ENCODE measurements at regions of chrX and their contacts with region 1.

Region 1: DNA sequence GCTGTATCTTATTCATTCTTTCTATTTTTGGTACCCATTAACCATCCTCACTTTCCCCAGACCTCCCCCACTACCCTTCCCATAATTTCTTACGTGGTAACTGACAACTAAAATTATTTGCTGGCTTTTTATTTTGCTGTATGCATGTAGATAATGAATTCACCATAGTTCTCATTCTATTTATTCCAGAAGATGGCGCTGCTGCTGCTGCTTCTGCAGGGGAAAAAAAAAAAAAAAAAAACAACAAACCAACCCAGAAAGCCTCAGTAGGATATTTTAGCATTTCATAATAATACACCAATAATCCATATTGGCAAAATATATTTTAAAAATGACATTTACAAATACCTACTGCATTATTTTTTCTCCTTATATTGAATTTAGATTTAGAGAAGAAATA is 416.6 kb upstream of the MAGEB18 start:
- DNase-seq: no peak
- ATAC-seq: no peak
- H3K4me3 ChIP-seq: no peak overlapping the region
- H3K27ac ChIP-seq: no peak overlapping the region
- H3K4me1 ChIP-seq: no peaks in the 10 kb centered on the region
- H3K27me3 ChIP-seq: no peaks in the 10 kb centered on the region
- CTCF ChIP-seq: peak in 2 of 3 experiments; percentile 16 to 37; a peak in 1 of 6 replicates
- POLR2A ChIP-seq: no peak
- RAD21 ChIP-seq: 0 out of 2 replicates have a peak, but pooled peaks have one; percentile 11

Region 2: GRCh38 chrX:25968920-25969319 is 247.4 kb after region 1 on chrX:
- CTCF ChIA-PET with region 1: no interaction called
- POLR2A ChIA-PET with region 1: no interaction called
- RAD21 ChIA-PET with region 1: no interaction called
- intact Hi-C with region 1: loop called (anchors 10 kb)
- DNase-seq: no peak
- ATAC-seq: no peak
- H3K4me3 ChIP-seq: no peak overlapping the region
- H3K27ac ChIP-seq: no peak overlapping the region
- H3K4me1 ChIP-seq: no peaks in the 10 kb centered on the region
- H3K27me3 ChIP-seq: no peaks in the 10 kb centered on the region
- CTCF ChIP-seq: peak in 2 of 3 experiments; percentile 23 to 38; a peak in 1 of 6 replicates
- POLR2A ChIP-seq: no peak
- RAD21 ChIP-seq: peak; percentile 24; the same call in 1 of the 2 replicates